ENCODE measurements at regions of chr6 and their contacts with region 1.

Region 1: DNA sequence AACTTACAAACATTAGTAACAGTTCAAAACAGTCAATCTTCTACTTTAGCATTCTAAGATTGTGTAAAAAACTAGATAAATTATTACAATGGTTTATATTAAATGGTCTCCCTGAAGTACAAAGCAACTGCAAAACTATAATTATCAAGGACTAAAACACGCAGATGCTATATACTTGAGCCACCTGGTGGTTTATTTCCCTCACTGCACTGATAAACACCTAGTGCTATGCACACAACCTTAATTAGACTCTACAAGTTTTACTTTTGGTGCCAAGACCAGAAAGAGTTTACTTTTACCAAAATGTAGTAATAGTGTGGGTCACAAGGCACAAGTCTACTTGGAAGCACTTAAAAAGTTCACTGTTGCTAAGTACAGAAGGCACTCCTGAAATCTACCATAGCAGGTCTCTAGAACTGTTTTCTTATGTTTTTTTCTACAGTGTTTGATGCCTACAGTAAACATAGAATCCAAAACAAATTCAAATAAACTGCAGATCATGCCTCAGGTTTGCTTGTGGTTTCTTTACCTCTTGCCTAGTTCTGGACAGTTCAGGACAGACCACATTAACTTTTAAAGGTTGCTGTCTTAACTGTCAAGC is 49.2 kb downstream of the GMDS start:
- ATAC-seq: peak in 4 of 8 experiments; percentile 41 to 72 (median 63)
- H3K4me3 ChIP-seq: no peak overlapping the region
- H3K27ac ChIP-seq: no peak overlapping the region
- H3K4me1 ChIP-seq: no peaks in the 10 kb centered on the region

Region 2: GRCh38 chr6:1609648-1610496 is 586.3 kb before region 1 on chr6 and contains the start of gene FOXC1:
- in situ Hi-C with region 1: loop called in 1 of 9 experiments (anchors 10 kb)
- ATAC-seq: peak; percentile 54 to 81 (median 70)
- H3K4me3 ChIP-seq: peak within 1 kb of the TSS; percentile 14 to 42 (median 22)
- H3K27ac ChIP-seq: no peak within 1 kb of the TSS
- H3K4me1 ChIP-seq: peaks cover 2 to 25% of the 10 kb centered on the region in 2 donors
- total RNA-seq, gene FOXC1: 0.05 to 44.4 (median 1.0) TPM

Region 3: DNA sequence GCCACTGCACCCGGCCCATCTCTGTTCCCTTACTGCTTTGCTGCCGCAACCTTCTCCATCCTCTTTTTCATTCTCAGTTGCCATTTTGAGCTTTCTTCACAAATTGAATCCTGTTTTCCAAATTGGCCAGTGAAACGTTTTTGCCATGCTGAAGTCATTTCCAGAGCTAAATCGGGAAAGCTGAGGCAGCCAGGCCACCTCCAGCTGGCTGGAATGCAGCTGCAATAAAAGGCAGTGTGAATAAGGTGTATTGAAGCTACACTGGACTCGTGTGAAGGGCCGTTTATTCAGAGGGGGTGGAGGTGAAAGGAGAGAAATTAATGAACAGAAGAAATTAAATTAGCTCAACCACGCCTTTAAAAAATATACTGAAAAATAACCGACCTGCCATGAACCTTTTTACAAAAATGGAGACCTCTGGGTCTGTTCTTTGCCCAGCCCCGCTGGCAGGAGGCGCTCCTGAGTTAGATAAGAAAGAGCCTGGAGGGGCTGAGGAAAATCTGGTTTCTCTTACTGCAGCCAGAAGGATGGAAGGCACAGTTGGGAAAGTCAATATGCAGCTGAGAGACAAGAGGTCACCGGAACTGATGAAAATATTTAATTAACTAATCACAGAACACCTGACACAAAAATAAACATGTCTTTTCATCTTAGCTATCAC is 302.6 kb before region 1 on chr6:
- in situ Hi-C with region 1: no loop called
- ATAC-seq: no peak
- H3K4me3 ChIP-seq: no peak overlapping the region
- H3K27ac ChIP-seq: no peak overlapping the region
- H3K4me1 ChIP-seq: no peaks in the 10 kb centered on the region

Region 4: DNA sequence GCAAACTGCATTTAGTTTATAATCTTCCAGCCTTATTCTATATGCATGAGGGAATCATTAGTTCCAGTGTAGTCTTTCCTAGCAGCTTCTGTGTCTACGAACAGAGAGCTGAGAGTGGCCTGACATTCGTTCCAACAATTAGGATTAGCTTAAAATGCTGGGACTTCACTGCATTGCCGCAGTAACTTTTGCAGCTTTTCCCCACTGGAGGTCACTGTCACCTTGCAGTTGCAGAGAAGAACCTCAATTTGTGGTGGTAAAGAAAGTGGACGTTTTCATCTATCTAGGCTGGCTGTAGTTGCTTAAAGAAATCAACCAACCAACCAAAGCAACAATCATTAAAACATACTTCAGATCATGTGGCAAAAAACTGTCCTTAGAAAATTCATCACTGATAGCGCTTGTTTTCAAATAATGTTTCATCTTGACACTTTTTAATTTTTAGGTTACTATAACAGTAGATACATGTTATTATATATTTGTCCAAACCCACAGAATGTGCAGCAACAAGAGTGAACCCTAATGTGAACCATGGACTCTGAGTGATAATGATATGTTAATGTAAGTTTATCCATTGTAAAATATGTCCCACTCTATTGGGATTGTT is 542.3 kb after region 1 on chr6:
- in situ Hi-C with region 1: no loop called
- ATAC-seq: peak; percentile 16 to 76 (median 61)
- H3K4me3 ChIP-seq: no peak overlapping the region
- H3K27ac ChIP-seq: no peak overlapping the region
- H3K4me1 ChIP-seq: peaks cover 3 to 13% of the 10 kb centered on the region in 2 donors